ENCODE measurements at regions of chr1 and their contacts with region 1.

Region 1: DNA sequence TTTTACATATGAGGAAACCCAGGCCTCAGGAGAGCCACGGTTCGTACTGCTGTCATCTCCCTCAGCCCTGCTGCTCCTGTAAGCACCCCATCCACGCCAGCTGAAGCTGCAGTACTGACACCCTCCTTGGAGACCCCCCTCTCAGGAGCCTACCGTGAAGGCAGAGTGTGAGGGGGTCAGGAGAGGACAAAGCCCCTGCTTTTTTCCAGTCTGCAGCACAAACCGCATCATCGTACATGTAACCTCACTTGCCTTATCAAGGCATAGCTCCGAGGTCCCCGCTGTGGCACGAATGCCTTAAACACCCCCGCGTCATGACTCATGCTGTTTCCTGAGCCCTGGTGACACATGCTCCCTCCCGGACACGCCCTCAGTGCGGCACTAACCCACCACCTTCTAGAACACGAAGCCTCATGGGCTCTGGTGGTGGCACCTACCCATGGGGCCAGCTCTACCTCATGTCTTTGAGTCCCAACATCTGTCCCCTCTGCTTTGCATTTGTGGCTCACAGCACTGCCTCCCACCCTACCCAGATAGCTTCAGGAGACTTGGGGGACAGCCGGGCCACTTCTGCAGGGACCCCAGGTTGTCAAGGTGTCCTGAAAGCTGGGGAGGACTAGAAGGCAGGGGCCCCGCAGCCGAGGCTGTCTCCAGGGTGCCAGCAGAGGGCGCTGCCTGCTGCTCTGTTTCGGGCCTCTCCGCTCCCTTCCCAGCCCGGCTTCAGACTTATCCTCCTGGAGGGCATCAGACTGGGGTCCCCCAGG is 4.9 kb downstream of the SH3BGRL3 start:
- DNase-seq: peak; percentile 86
- ATAC-seq: peak; percentile 54
- H3K4me3 Mint-ChIP-seq: no peak overlapping the region
- H3K27ac Mint-ChIP-seq: peak overlapping the region; percentile 81
- H3K4me1 Mint-ChIP-seq: peaks cover 37% of the 10 kb centered on the region
- H3K27me3 Mint-ChIP-seq: no peaks in the 10 kb centered on the region; the same call in 1 of the 2 replicates
- CTCF ChIP-seq: peak; percentile 86

Region 2: DNA sequence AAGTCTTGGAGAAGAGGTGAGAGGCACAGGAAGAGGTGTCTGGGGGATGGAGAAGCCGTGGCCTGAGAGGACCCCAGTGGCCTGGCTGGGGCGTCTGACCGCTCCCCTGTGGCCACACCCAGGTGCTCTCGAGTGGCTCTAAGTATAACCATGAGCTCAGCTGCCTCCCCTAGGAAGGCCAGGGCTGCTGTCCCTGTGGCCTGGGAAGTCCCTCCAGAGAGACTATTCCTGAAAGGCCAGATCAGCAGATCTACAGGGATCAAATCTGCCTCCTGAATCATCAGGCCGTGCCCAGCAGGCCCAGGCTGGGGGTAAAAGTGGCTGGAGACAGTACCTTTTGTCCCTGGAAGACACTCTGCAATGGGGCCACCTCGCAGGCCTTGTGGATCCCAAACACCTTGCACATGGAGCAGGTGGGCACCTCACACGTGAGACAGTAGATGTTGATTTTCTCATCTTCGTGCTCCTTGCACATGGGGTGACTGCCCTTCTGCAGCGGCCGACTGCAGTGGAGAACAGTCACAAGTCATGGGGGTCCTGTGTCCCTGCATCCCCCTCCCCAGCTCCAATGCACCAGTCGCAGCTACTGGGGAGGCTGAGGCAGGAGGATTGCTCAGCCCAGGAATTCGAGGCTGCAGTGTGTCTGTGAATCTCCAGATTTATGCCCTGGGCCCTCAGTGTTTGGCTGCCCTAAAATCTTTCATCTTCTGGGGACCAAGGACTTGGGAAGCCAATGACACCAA is 223.8 kb before region 1 on chr1:
- CTCF ChIA-PET with region 1: no interaction called
- POLR2A ChIA-PET with region 1: no interaction called
- DNase-seq: no peak
- ATAC-seq: no peak
- H3K4me3 Mint-ChIP-seq: no peak overlapping the region
- H3K27ac Mint-ChIP-seq: no peak overlapping the region
- H3K4me1 Mint-ChIP-seq: no peaks in the 10 kb centered on the region
- H3K27me3 Mint-ChIP-seq: peaks cover 7% of the 10 kb centered on the region
- CTCF ChIP-seq: no peak

Region 3: DNA sequence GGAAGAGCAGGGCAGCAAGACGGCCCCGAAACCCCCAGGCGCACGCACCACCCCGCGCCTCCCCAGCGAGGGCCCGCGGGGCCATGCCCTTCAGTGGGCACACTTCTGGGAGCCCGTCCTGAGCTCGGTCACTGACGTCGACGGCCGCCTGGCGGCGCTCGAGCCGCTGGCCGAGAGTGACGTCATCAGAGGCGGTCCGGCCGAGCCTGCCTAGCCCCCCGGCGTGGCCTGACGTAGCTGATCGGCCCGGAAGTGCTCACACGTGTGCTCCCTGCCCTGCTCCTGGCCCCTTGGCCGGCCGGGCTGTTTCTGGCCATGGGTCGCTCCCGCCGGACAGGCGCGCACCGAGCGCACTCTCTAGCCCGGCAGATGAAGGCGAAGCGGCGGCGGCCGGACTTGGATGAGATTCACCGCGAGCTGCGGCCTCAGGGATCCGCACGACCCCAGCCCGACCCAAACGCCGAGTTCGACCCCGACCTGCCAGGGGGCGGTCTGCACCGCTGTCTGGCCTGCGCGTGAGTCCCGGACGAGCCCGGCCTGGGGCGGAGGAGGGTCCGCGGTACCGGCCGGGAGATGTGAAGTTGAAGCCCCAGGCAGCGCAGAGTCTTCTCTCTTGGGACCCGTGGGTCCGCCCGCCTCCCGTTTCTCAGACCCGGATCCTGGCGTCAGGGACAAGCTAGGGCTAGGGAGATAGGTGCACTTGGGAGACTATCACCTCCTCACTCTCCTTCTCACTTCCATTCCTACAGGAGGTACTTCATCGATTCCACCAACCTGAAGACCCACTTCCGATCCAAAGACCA is 114.9 kb before region 1 on chr1 and contains the start of gene ZNF593:
- CTCF ChIA-PET with region 1: interaction called, 14 read pairs
- POLR2A ChIA-PET with region 1: no interaction called
- DNase-seq: peak; percentile 92
- ATAC-seq: peak; percentile 76
- H3K4me3 Mint-ChIP-seq: peak within 1 kb of the TSS; percentile 85
- H3K27ac Mint-ChIP-seq: peak within 1 kb of the TSS; percentile 65; the same call in 1 of the 2 replicates
- H3K4me1 Mint-ChIP-seq: peaks cover 31% of the 10 kb centered on the region
- H3K27me3 Mint-ChIP-seq: peaks cover 14% of the 10 kb centered on the region
- CTCF ChIP-seq: peak; percentile 81
- total RNA-seq, gene ZNF593: 39.6 to 49.1 TPM (median 43.3 TPM) in 3 replicates

Region 4: GRCh38 chr1:26300586-26301275 is 16.0 kb after region 1 on chr1:
- CTCF ChIA-PET with region 1: interaction called, 28 read pairs
- POLR2A ChIA-PET with region 1: no interaction called
- DNase-seq: no peak
- ATAC-seq: no peak
- H3K4me3 Mint-ChIP-seq: no peak overlapping the region
- H3K27ac Mint-ChIP-seq: peak overlapping the region; percentile 78; the same call in 1 of the 2 replicates
- H3K4me1 Mint-ChIP-seq: peaks cover 6% of the 10 kb centered on the region
- H3K27me3 Mint-ChIP-seq: no peaks in the 10 kb centered on the region
- CTCF ChIP-seq: no peak

Region 5: DNA sequence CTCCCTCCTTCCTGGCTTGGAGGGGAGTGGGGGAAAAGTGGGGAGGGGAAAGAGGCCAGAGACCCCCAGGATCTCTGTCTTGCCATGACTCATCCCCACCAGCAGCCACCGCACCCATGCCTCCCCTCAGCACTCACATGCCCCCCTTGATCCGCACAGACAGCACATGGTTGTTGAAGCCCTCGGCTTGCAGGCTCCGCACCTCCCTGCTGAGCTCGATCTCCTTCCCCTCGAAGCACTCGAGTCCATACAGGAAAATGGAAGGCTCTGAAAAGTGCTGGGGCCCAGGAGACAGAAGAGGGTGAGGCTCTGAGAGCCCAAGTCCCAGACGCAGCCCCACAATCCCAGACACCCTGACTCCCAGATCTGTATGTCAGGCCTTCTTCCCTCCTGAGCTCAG is 43.8 kb after region 1 on chr1:
- CTCF ChIA-PET with region 1: interaction called, 306 read pairs
- POLR2A ChIA-PET with region 1: interaction called, 3 read pairs
- DNase-seq: no peak
- ATAC-seq: no peak
- H3K4me3 Mint-ChIP-seq: no peak overlapping the region
- H3K27ac Mint-ChIP-seq: peak overlapping the region; percentile 49; the same call in 1 of the 2 replicates
- H3K4me1 Mint-ChIP-seq: no peaks in the 10 kb centered on the region
- H3K27me3 Mint-ChIP-seq: no peaks in the 10 kb centered on the region
- CTCF ChIP-seq: no peak

Region 6: GRCh38 chr1:26363549-26364448 is 79.0 kb after region 1 on chr1:
- CTCF ChIA-PET with region 1: interaction called, 30 read pairs
- POLR2A ChIA-PET with region 1: interaction called, 3 read pairs
- DNase-seq: peak; percentile 87
- ATAC-seq: peak; percentile 54
- H3K4me3 Mint-ChIP-seq: no peak overlapping the region
- H3K27ac Mint-ChIP-seq: no peak overlapping the region
- H3K4me1 Mint-ChIP-seq: peaks cover 26% of the 10 kb centered on the region
- H3K27me3 Mint-ChIP-seq: peaks cover 43% of the 10 kb centered on the region
- CTCF ChIP-seq: peak; percentile 79

Region 7: GRCh38 chr1:26417111-26417759 is 132.5 kb after region 1 on chr1:
- CTCF ChIA-PET with region 1: interaction called, 85 read pairs
- POLR2A ChIA-PET with region 1: interaction called, 5 read pairs
- DNase-seq: peak; percentile 95
- ATAC-seq: peak; percentile 64
- H3K4me3 Mint-ChIP-seq: peak overlapping the region; percentile 61
- H3K27ac Mint-ChIP-seq: peak overlapping the region; percentile 100
- H3K4me1 Mint-ChIP-seq: peaks cover 91% of the 10 kb centered on the region
- H3K27me3 Mint-ChIP-seq: no peaks in the 10 kb centered on the region
- CTCF ChIP-seq: peak; percentile 92

Region 8: DNA sequence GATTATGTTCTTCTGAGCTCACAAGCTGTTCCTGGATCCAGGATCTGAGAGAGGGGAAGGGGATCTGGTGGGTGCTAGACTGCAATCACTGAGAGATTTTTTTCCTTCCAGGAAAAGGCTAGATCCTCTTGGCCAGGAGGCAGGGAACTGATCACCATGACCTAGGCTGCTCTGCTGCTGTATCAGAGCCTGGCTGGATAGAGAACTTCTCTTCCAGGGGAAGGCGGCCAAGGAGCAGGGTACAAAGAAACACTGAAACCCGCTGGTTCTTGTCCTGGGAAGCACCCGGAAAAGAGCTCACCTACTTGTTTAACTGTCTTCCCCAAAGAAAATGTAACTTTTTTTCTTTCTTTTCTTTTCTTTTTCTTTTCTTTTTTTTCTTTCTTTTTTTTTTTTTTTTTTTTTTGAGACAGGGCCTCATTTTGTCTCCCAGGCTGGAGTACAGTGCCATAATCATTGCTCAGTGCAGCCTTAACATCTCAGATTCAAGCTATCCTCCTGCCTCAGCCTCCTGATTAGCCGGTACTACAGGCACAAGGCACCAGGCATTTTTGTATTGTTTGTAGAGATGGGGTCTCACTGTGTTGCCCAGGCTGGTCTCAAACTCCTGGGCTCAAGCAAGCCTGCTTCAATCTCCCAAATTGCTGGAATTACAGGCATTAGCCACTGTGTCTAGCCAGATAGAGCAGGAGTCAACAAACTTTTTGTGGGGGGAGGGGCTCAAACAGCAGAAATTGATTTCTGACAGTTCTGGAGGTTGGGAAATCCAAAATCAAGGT is 232.4 kb after region 1 on chr1:
- CTCF ChIA-PET with region 1: no interaction called
- POLR2A ChIA-PET with region 1: no interaction called
- DNase-seq: no peak
- ATAC-seq: no peak
- H3K4me3 Mint-ChIP-seq: no peak overlapping the region
- H3K27ac Mint-ChIP-seq: no peak overlapping the region
- H3K4me1 Mint-ChIP-seq: peaks cover 9% of the 10 kb centered on the region
- H3K27me3 Mint-ChIP-seq: no peaks in the 10 kb centered on the region
- CTCF ChIP-seq: no peak

Measured in WTC11 (cell line).